Psoas muscle (tissue), 8 donors: ENCODE measurements at regions of chr17 and their contacts with region 1.

Region 1: GRCh38 chr17:35747540-35748017 is 5.5 kb downstream of the GAS2L2 start:
- DNase-seq: peak; percentile 67 to 84
- ATAC-seq: peak; percentile 86 to 93 (median 89)
- H3K4me3 ChIP-seq: no peak overlapping the region
- H3K27ac ChIP-seq: no peak overlapping the region
- H3K4me1 ChIP-seq: no peaks in the 10 kb centered on the region
- H3K27me3 ChIP-seq: peaks cover 0 to 16% (median 4%) of the 10 kb centered on the region in 3 donors
- CTCF ChIP-seq: peak; percentile 94

Region 2: GRCh38 chr17:35612924-35613521 is 134.6 kb before region 1 on chr17:
- intact Hi-C with region 1: loop called (anchors 1 to 2 kb)
- DNase-seq: peak in 1 of 2 donors; percentile 27
- ATAC-seq: peak in 2 of 4 donors; percentile 45 to 49
- H3K4me3 ChIP-seq: no peak overlapping the region
- H3K27ac ChIP-seq: no peak overlapping the region
- H3K4me1 ChIP-seq: peaks cover 33% of the 10 kb centered on the region
- H3K27me3 ChIP-seq: no peaks in the 10 kb centered on the region
- CTCF ChIP-seq: peak; percentile 69

Region 3: GRCh38 chr17:35655303-35655702 is 92.3 kb before region 1 on chr17:
- intact Hi-C with region 1: loop called (anchors 5 kb)
- DNase-seq: no peak
- ATAC-seq: no peak
- H3K4me3 ChIP-seq: no peak overlapping the region
- H3K27ac ChIP-seq: no peak overlapping the region
- H3K4me1 ChIP-seq: peaks cover 10% of the 10 kb centered on the region
- H3K27me3 ChIP-seq: no peaks in the 10 kb centered on the region
- CTCF ChIP-seq: no peak

Region 4: GRCh38 chr17:35660902-35661301 is 86.7 kb before region 1 on chr17:
- intact Hi-C with region 1: loop called (anchors 5 kb)
- DNase-seq: no peak
- ATAC-seq: peak; percentile 90 to 97 (median 94)
- H3K4me3 ChIP-seq: no peak overlapping the region
- H3K27ac ChIP-seq: peak overlapping the region; percentile 62
- H3K4me1 ChIP-seq: peaks cover 23% of the 10 kb centered on the region
- H3K27me3 ChIP-seq: no peaks in the 10 kb centered on the region
- CTCF ChIP-seq: peak; percentile 40

Region 5: GRCh38 chr17:35709874-35710273 is 37.7 kb before region 1 on chr17:
- intact Hi-C with region 1: no loop called
- DNase-seq: no peak
- ATAC-seq: no peak
- H3K4me3 ChIP-seq: no peak overlapping the region
- H3K27ac ChIP-seq: peak overlapping the region; percentile 46
- H3K4me1 ChIP-seq: peaks cover 50% of the 10 kb centered on the region
- H3K27me3 ChIP-seq: no peaks in the 10 kb centered on the region
- CTCF ChIP-seq: no peak

Region 6: DNA sequence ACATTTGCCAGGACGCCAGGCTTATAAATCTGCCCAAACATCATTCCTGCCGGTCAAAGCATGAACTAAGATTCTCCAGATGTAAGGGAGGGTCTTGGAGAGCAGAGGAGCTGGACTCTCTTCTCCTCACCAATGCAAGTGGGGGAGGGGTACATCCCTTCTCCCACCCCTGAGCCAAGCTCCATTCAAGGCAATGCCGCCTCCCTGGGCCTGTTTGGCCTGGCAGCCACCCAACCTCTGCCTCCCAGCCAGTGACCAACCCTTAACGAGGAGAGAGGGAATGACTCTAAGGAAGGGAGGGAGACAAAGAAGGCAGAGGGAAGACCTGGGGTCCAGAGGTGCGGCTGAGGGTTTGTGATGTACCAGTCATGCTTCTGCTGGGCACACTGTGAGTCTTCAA is 26.9 kb after region 1 on chr17:
- intact Hi-C with region 1: no loop called
- DNase-seq: no peak
- ATAC-seq: no peak
- H3K4me3 ChIP-seq: no peak overlapping the region
- H3K27ac ChIP-seq: peak overlapping the region; percentile 4
- H3K4me1 ChIP-seq: no peaks in the 10 kb centered on the region
- H3K27me3 ChIP-seq: peaks cover 0 to 4% (median 0%) of the 10 kb centered on the region in 3 donors
- CTCF ChIP-seq: no peak

Region 7: DNA sequence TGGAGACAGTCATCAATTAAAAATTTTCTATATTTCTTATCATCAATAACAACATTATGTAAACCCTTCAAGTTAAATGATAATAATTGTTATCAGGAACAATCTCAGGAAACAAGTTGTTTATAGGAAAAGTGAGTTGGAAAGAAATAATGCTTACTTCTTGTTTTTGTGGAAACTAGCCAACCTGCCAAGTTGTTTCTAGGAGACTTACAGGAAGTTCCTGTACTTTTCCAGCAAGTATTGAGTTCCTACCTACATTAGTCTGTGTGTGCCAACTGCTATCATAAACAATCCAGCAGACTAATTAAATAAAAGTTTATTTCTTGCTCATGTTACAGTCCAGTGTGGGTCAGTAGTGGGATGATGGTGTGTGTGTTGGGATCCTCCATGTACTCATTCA is 240.6 kb after region 1 on chr17:
- intact Hi-C with region 1: no loop called
- DNase-seq: no peak
- ATAC-seq: no peak
- H3K4me3 ChIP-seq: no peak overlapping the region
- H3K27ac ChIP-seq: no peak overlapping the region
- H3K4me1 ChIP-seq: no peaks in the 10 kb centered on the region
- H3K27me3 ChIP-seq: peaks cover 0 to 2% (median 0%) of the 10 kb centered on the region in 3 donors
- CTCF ChIP-seq: no peak